PC-9 (cell line): ENCODE measurements at regions of chr21 and their contacts with region 1.

Region 1: DNA sequence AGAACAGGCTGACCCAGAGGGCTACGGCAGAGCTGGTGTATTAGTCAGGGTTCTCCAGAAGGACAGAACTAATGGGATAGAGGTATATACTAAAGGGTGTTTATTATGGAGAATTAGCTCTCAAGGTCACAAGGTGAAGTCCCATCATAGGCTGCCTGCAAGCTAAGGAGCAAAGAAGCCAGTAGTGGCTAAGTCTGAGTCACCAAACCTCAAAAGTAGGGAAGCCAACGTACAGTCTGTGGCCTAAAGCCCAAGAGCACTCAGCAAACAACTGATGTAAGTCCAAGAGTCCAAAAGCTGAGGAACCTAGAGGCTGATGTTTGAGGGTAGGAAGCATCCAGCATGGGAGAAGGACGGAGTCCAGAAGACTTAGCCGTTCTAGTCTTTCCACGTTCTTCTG is 179.2 kb downstream of the BACH1 start:
- DNase-seq: no peak
- H3K4me3 ChIP-seq: no peak overlapping the region
- H3K27ac ChIP-seq: no peak overlapping the region
- H3K4me1 ChIP-seq: no peaks in the 10 kb centered on the region
- H3K27me3 ChIP-seq: no peaks in the 10 kb centered on the region
- CTCF ChIP-seq: no peak

Region 2: DNA sequence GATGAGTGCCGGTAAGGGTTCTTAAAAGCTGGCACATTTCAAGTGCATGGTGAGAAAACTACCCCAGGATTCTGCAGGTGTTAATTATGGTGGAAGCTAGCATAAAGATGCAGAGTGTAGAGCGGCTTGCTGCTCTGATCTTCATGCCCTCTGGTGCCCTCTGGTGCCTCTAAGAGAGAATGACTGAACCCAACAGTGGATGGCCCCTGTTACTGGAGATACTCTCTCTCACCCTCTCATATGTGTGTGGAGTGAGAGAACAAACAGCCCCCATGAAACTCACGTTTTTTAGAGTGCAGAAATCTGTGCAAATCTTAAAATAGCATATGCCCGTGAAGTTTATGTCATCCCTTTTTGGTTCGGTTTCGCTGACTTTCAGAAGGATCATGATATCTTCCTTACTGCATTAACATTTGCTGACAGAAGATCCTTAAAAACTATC is 371.8 kb after region 1 on chr21:
- CTCF ChIA-PET with region 1: no interaction called
- POLR2A ChIA-PET with region 1: no interaction called
- intact Hi-C with region 1: loop called (anchors 1 kb)
- DNase-seq: peak in 1 of 2 experiments; percentile 22
- H3K4me3 ChIP-seq: no peak overlapping the region
- H3K27ac ChIP-seq: no peak overlapping the region
- H3K4me1 ChIP-seq: no peaks in the 10 kb centered on the region
- H3K27me3 ChIP-seq: no peaks in the 10 kb centered on the region
- CTCF ChIP-seq: peak; percentile 75